Prostate gland (tissue), 2 donors: ENCODE measurements at regions of chr7 and their contacts with region 1.

Region 1: GRCh38 chr7:30630986-30631385 is 36.3 kb downstream of the GARS1 start:
- DNase-seq: no peak
- H3K4me3 ChIP-seq: no peak overlapping the region
- H3K27ac ChIP-seq: no peak overlapping the region
- H3K4me1 ChIP-seq: no peaks in the 10 kb centered on the region
- H3K27me3 ChIP-seq: no peaks in the 10 kb centered on the region
- CTCF ChIP-seq: no peak
- POLR2A ChIP-seq: no peak

Region 2: GRCh38 chr7:30469303-30469702 is 161.7 kb before region 1 on chr7:
- intact Hi-C with region 1: no loop called
- DNase-seq: no peak
- H3K4me3 ChIP-seq: no peak overlapping the region
- H3K27ac ChIP-seq: peak overlapping the region; percentile 33 to 59
- H3K4me1 ChIP-seq: peaks cover 5% of the 10 kb centered on the region
- H3K27me3 ChIP-seq: no peaks in the 10 kb centered on the region
- CTCF ChIP-seq: peak in 2 of 4 experiments; percentile 22 to 28
- POLR2A ChIP-seq: no peak

Region 3: GRCh38 chr7:30612658-30613265 is 18.2 kb before region 1 on chr7:
- intact Hi-C with region 1: no loop called
- DNase-seq: no peak
- H3K4me3 ChIP-seq: no peak overlapping the region
- H3K27ac ChIP-seq: no peak overlapping the region
- H3K4me1 ChIP-seq: no peaks in the 10 kb centered on the region
- H3K27me3 ChIP-seq: no peaks in the 10 kb centered on the region
- CTCF ChIP-seq: no peak
- POLR2A ChIP-seq: no peak

Region 4: DNA sequence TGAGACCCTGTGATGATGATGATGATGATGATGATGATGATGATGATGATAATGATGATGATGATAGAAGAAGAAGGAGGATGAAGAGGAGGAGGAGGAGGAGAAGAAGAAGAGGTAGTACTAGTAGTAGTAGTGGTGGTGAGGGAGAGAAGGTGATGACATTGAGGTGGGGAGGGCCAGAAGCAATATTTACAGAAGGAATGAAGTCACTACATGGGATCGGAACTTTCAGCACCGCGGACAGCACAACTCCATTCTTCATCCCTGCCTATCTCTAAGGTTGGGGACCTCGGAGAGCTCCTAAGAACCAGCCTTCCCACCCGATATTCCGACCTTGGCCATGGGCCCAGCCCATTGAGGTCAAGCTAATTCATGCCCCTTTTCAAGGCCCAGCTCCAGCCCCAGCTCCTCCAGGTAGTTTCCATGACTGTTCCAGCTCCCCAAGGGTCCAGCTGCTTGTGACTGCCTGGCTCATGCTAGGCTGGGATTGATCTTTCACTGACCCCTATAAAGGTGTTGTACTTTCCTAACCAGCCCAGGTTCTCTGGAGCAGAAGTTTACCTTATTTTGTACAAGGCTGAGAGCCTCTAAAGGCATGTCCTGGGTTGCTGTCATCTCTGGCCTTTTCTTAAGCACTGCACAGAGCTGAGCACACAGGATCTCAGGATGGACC is 40.9 kb after region 1 on chr7:
- intact Hi-C with region 1: no loop called
- DNase-seq: no peak
- H3K4me3 ChIP-seq: no peak overlapping the region
- H3K27ac ChIP-seq: no peak overlapping the region
- H3K4me1 ChIP-seq: no peaks in the 10 kb centered on the region
- H3K27me3 ChIP-seq: no peaks in the 10 kb centered on the region
- CTCF ChIP-seq: no peak
- POLR2A ChIP-seq: no peak

Region 5: DNA sequence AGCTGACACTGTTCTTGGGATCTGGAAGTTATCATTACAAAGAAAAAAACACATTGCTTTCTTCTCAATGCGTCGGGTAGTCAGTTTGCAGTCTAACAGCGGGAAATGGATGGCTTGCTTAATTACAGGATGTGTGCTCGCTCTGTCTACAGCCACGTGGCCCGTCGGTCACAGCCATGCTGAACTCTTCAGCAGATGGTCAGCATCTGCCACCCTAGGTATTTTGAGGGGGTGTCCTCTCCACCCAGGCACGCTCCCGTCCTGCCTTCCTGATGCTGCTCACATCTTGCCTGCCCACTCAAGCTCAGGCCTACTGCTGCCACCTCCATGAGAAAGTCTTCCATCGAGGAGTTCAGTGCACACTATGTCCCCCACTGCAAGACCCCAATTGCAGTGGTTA is 100.6 kb after region 1 on chr7:
- intact Hi-C with region 1: loop called (anchors 10 kb)
- DNase-seq: no peak
- H3K4me3 ChIP-seq: no peak overlapping the region
- H3K27ac ChIP-seq: no peak overlapping the region
- H3K4me1 ChIP-seq: no peaks in the 10 kb centered on the region
- H3K27me3 ChIP-seq: peaks cover 4% of the 10 kb centered on the region
- CTCF ChIP-seq: no peak
- POLR2A ChIP-seq: no peak

Region 6: DNA sequence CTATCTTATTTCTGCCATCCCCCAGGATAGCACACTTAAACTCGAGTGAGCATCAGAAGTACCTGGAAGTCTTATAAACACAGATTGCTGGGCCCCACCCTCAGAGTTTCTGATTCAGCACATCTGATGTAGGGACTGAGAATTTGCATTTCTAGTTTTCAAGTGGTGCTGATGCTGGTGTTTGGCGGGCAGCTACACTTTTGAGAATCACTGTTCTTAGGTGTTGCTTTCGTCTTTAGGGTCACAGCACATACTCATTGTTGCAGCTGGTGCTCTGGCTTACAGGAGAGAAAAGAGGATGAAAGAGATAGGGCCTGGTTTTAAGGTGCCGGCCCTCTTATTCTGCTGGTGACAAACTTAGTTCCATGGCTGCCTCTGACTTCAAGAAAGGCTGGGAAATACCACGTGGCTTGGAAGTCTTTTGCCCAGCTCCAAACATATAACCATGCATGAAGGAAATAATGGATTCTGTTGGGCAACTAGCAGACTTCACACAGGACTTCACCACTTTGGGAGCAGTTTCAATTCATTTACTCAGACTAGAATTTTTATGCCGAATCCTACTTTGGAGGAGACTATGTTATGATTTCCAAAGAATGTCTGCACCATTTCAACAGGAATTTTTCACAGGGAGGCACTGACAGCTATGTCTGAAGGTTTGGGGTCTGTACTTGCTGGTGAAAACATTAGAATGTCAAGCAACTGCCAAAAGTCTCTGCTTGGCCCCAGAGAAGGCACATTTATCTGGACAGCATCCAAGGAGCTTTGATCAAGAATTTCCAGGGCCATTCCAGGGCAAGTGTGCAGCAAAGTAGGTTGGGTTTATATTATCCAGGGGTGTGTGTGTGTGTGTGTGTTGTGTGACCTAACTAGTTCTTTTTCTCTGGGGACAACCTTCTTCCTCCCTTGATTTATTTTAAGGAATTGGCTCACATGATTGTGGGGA is 133.3 kb after region 1 on chr7:
- intact Hi-C with region 1: no loop called
- DNase-seq: peak; percentile 65
- H3K4me3 ChIP-seq: no peak overlapping the region
- H3K27ac ChIP-seq: peak overlapping the region in 1 of 2 donors; percentile 17
- H3K4me1 ChIP-seq: no peaks in the 10 kb centered on the region
- H3K27me3 ChIP-seq: no peaks in the 10 kb centered on the region
- CTCF ChIP-seq: no peak
- POLR2A ChIP-seq: no peak